Heart left ventricle (tissue), 16 donors: ENCODE measurements at regions of chr11 and their contacts with region 1.

Region 1: DNA sequence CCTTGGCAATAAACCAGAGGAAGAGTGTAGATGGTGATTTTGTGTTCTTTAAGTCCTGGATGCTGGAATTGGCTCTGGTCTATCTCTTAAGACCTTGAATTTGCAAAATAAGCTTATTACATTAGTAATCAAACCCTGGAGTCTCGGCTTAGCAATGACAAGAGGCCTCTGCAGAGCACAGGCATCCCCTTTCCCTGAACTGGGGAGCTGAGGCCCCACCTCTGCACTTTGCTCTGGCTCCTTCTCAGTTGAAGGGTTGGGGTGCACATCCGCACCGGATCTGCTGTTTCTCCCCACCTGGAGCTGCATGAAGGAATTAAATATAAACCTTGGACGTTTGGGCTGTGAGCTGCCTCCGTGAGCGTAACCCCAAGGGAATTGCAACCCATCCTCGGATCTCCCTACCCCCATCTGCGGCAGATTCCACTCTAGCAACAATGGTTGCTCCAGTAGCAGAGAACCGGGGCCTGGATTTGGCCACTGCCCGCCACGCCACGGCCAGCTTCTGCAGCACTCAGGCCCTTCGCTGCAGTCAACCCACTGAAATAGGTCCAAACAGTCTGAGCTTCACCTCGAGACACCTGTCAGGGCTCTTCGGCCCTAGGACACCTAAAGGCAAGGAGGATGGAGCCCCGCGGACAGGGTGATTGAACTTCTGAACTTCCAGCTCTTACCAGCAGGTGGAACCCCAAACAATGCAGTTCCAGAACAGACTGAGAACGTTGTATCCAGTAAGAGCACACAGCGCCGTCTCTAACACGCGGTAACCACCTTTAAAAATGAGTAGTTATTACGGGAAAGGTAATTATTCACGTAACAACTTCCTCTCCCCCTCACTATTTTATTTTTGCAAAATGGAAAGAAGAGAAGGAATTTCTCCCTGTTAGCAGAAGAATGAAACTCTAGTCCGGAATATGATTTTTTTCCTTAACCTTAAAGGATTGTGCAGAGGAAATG is 54.8 kb upstream of the CAPRIN1 start:
- DNase-seq: peak in 4 of 5 donors; percentile 44 to 69 (median 60)
- ATAC-seq: peak; percentile 82 to 98 (median 95)
- H3K4me3 ChIP-seq: no peak overlapping the region
- H3K27ac ChIP-seq: no peak overlapping the region
- H3K4me1 ChIP-seq: peaks cover 0 to 4% (median 0%) of the 10 kb centered on the region in 12 donors
- H3K27me3 ChIP-seq: peaks cover 0 to 14% (median 2%) of the 10 kb centered on the region in 9 donors
- CTCF ChIP-seq: peak; percentile 72 to 87 (median 80)
- POLR2A ChIP-seq: no peak

Region 2: DNA sequence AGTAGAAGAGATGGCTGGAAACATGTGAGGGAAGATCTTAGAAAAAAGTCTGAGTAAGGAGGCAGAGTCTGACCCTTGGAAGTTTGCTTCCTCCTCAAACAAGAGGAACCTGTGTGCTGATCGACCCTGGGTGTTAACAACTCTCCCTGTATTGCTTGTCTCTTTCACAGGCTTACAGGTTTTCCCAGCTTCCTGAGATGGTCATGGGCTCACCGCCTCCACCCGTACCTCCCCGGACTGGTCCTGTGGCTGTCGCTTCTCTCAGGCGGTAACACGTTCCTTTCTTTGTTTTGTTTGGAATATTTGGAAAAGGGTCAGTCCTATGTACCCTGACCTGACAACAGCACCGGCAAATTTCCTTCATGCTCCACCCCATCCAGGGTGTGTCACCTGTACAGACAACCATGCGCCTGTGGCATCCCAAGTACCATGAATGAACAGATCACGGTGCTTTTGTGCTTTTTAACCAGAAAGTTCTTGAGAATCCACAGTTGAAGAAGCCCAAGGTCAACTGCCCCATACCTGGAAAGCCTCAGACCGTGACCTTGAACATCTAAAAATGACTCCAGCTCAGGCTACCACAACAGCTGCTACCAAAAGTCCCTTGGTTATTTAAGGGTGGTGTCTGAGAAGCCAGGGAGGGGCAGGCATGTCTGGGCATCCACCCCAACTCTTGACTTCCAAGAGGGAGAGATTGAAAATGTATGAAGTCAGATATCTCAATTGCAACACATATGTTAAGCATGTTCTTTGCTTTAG is 340.8 kb before region 1 on chr11:
- intact Hi-C with region 1: no loop called
- DNase-seq: no peak
- ATAC-seq: no peak
- H3K4me3 ChIP-seq: no peak overlapping the region
- H3K27ac ChIP-seq: no peak overlapping the region
- H3K4me1 ChIP-seq: peaks cover 0 to 18% (median 8%) of the 10 kb centered on the region in 12 donors
- H3K27me3 ChIP-seq: no peaks in the 10 kb centered on the region
- CTCF ChIP-seq: no peak
- POLR2A ChIP-seq: no peak

Region 3: GRCh38 chr11:34044664-34045485 is 48.1 kb after region 1 on chr11:
- intact Hi-C with region 1: loop called in 2 of 10 experiments (anchors 5 kb)
- DNase-seq: no peak
- ATAC-seq: peak in 2 of 4 donors; percentile 34 to 55
- H3K4me3 ChIP-seq: peak overlapping the region in 1 of 12 donors; percentile 2
- H3K27ac ChIP-seq: no peak overlapping the region
- H3K4me1 ChIP-seq: no peaks in the 10 kb centered on the region
- H3K27me3 ChIP-seq: no peaks in the 10 kb centered on the region
- CTCF ChIP-seq: no peak
- POLR2A ChIP-seq: no peak

Region 4: DNA sequence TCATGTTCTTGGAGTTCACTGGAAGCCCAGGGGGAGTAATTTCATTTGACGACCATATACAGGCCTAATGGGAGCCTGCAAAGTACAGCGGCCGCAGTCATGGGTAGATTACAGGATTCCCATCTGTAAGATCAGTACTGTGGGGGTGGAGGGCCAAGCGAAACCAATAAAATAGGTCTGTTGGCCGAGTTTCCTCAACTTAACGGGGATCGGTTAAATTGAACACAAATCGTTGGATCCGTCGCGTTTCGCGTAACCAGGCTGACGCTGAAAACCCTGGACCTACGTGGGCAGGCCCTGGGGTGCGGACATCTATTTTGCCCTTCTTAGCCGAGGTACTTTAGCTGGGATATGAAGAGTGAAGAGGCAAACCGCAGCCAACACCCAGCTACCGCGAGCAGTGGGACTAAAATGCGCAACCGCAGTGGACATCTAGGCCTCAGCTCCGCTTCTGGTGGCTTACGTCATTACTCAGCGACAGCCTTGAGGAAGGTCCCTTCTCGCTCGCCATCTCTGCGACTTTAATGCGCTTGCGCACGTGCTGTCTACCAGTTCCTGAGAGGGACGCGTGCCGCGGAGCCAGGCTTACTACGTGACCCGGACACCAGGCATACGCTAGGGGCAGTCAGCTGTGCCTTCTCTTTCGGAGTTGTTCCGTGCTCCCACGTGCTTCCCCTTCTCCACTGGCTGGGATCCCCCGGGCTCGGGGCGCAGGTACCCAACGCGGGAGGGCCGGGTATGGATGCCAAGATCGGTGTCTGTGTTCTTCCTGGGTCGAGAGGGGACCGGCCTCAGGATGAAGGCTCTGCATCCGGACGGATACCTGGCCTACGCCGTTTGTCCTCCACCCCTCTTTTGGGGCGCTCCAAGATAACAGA is 108.5 kb after region 1 on chr11 and contains the start of gene NAT10:
- intact Hi-C with region 1: loop called in 8 of 10 experiments (anchors 2 to 10 kb)
- DNase-seq: peak; percentile 96 to 98 (median 97)
- ATAC-seq: peak; percentile 96 to 99 (median 98)
- H3K4me3 ChIP-seq: peak within 1 kb of the TSS; percentile 69 to 98 (median 88)
- H3K27ac ChIP-seq: peak within 1 kb of the TSS; percentile 83 to 97 (median 92)
- H3K4me1 ChIP-seq: peaks cover 0 to 25% (median 14%) of the 10 kb centered on the region in 12 donors
- H3K27me3 ChIP-seq: no peaks in the 10 kb centered on the region
- CTCF ChIP-seq: peak in 4 of 12 donors; percentile 6 to 23 (median 15)
- POLR2A ChIP-seq: peak in 1 of 2 donors; percentile 84
- total RNA-seq, gene NAT10: 14.5 to 27.1 (median 21.2) TPM

Region 5: DNA sequence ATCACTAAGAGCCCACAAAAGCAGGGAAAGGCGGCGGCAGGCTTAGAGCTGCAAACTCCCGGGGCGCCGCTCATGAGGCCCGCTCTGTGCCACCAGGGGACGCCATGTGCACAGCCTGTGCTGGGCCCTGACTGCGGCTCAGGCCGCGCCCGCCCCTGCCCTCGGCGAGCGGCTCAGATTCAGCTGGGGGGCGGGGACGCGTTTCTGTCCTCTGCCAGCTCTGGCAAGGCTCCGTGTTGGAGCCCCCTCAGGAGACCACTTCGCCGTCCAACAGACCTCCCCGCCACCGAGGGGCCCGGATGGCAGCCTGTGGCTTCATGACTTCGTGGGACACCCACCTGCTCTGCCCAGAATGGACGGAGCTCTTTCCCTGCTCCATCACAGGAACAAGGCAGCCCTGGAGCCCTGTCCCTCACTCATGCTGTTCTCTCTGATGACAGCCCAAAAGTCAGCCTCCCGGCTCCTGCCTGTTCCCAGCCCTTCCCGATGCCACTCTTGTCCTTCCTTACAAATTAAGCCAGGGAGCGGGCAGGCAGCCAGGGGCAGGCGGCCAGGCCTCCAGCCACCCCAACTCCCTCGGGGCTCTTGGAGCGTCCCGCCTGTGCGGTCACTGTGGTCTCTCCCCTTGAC is 177.8 kb after region 1 on chr11:
- intact Hi-C with region 1: loop called in 6 of 10 experiments (anchors 5 to 10 kb)
- DNase-seq: peak; percentile 82 to 93 (median 83)
- ATAC-seq: peak; percentile 94 to 99 (median 98)
- H3K4me3 ChIP-seq: peak overlapping the region in 10 of 12 donors; percentile 17 to 48 (median 32)
- H3K27ac ChIP-seq: peak overlapping the region in 1 of 12 donors; percentile 24
- H3K4me1 ChIP-seq: peaks cover 0 to 17% (median 11%) of the 10 kb centered on the region in 12 donors
- H3K27me3 ChIP-seq: no peaks in the 10 kb centered on the region
- CTCF ChIP-seq: peak; percentile 85 to 97 (median 93)
- POLR2A ChIP-seq: no peak

Region 6: DNA sequence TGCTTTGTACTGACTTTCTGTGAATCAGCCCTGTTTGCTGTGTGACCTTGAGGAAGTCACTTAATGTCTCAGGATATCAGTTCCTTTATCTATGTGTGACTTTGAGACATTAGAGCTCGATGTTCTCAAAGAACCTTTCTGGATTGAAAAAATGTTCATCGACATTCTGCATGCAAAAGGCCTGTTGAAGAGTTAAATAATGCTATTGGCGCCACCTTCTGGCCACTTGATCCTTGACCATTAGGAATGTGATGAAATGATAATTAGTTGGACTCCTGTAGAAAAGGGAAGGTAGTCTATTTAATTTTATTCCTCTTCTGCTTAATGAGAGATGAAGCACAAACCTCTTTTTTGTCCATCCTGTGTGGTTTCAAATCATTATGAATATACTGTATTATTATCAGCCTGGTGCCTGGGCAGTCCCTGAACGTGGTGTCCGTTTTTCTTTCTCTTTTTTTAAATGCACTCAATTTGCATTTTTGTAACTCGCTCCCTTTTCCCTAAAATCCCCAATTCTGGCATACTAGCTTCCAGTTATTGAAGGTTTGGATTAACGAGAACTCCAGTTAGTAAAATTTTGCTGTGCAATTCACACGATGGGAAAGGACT is 496.1 kb after region 1 on chr11:
- intact Hi-C with region 1: loop called in 2 of 10 experiments (anchors 10 kb)
- DNase-seq: peak in 3 of 5 donors; percentile 16 to 62 (median 31)
- ATAC-seq: peak in 1 of 4 donors; percentile 36
- H3K4me3 ChIP-seq: no peak overlapping the region
- H3K27ac ChIP-seq: no peak overlapping the region
- H3K4me1 ChIP-seq: no peaks in the 10 kb centered on the region
- H3K27me3 ChIP-seq: peaks cover 0 to 3% (median 0%) of the 10 kb centered on the region in 9 donors
- CTCF ChIP-seq: peak; percentile 44 to 80 (median 69)
- POLR2A ChIP-seq: no peak